HepG2 (cell line): ENCODE measurements at regions of chr1 and their contacts with region 1.

Region 1: GRCh38 chr1:235415008-235415904 is 48.0 kb downstream of the TBCE start:
- DNase-seq: peak; percentile 80
- ATAC-seq: peak; percentile 78
- H3K4me3 ChIP-seq: no peak overlapping the region
- H3K27ac ChIP-seq: peak overlapping the region; percentile 51
- H3K4me1 ChIP-seq: peaks cover 54% of the 10 kb centered on the region
- H3K27me3 ChIP-seq: no peaks in the 10 kb centered on the region
- CTCF ChIP-seq: peak; percentile 77
- EP300 ChIP-seq: no peak
- POLR2A ChIP-seq: no peak
- RAD21 ChIP-seq: peak; percentile 71

Region 2: GRCh38 chr1:234486498-234487448 is 928.5 kb before region 1 on chr1:
- CTCF ChIA-PET with region 1: no interaction called
- POLR2A ChIA-PET with region 1: no interaction called
- in situ Hi-C with region 1: no loop called
- intact Hi-C with region 1: loop called (anchors 10 kb)
- DNase-seq: peak; percentile 77
- ATAC-seq: peak; percentile 91
- H3K4me3 ChIP-seq: peak overlapping the region in 2 of 3 experiments; percentile 27 to 40; a peak in 1 of 6 replicates
- H3K27ac ChIP-seq: no peak overlapping the region
- H3K4me1 ChIP-seq: peaks cover 26% of the 10 kb centered on the region
- H3K27me3 ChIP-seq: 0 out of 5 replicates have a peak, but pooled peaks cover 1 to 10% of the 10 kb centered on the region in 2 experiments
- CTCF ChIP-seq: peak; percentile 91
- EP300 ChIP-seq: no peak
- POLR2A ChIP-seq: no peak
- RAD21 ChIP-seq: peak; percentile 76

Region 3: GRCh38 chr1:235100194-235100772 is 315.0 kb before region 1 on chr1:
- CTCF ChIA-PET with region 1: interaction called, 4 read pairs
- POLR2A ChIA-PET with region 1: no interaction called
- in situ Hi-C with region 1: loop called (anchors 5 kb)
- intact Hi-C with region 1: loop called (anchors 5 kb)
- DNase-seq: peak; percentile 52
- ATAC-seq: peak; percentile 48
- H3K4me3 ChIP-seq: no peak overlapping the region
- H3K27ac ChIP-seq: peak overlapping the region; percentile 13
- H3K4me1 ChIP-seq: peaks cover 63% of the 10 kb centered on the region
- H3K27me3 ChIP-seq: no peaks in the 10 kb centered on the region
- CTCF ChIP-seq: no peak
- EP300 ChIP-seq: 0 out of 4 replicates have a peak, but pooled peaks of 1 of the 2 experiments have one; percentile 26
- POLR2A ChIP-seq: no peak
- RAD21 ChIP-seq: no peak

Region 4: DNA sequence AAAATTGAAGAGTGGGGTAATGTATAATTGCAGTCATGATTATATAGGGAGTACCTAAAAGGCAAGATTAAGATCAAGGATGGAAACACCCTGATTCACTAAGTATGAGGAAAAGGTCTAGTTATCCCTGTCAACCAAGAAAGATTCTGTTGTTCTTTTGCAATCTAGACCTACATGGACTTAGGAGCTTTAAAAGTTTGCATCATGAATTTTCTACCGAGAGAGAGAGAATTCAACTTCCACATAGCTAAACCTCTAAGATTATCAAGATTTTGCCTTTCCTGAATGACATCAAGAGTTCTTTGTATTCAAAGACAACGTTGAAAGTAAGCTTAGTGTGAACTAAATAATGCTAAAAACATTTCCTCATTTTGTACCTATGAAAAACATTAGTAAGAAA is 175.4 kb before region 1 on chr1:
- CTCF ChIA-PET with region 1: no interaction called
- POLR2A ChIA-PET with region 1: interaction called, 3 read pairs
- in situ Hi-C with region 1: no loop called
- intact Hi-C with region 1: loop called (anchors 5 kb)
- DNase-seq: peak; percentile 21
- ATAC-seq: no peak
- H3K4me3 ChIP-seq: no peak overlapping the region
- H3K27ac ChIP-seq: peak overlapping the region; percentile 3
- H3K4me1 ChIP-seq: peaks cover 39% of the 10 kb centered on the region
- H3K27me3 ChIP-seq: no peaks in the 10 kb centered on the region
- CTCF ChIP-seq: no peak
- EP300 ChIP-seq: no peak
- POLR2A ChIP-seq: no peak
- RAD21 ChIP-seq: no peak

Region 5: DNA sequence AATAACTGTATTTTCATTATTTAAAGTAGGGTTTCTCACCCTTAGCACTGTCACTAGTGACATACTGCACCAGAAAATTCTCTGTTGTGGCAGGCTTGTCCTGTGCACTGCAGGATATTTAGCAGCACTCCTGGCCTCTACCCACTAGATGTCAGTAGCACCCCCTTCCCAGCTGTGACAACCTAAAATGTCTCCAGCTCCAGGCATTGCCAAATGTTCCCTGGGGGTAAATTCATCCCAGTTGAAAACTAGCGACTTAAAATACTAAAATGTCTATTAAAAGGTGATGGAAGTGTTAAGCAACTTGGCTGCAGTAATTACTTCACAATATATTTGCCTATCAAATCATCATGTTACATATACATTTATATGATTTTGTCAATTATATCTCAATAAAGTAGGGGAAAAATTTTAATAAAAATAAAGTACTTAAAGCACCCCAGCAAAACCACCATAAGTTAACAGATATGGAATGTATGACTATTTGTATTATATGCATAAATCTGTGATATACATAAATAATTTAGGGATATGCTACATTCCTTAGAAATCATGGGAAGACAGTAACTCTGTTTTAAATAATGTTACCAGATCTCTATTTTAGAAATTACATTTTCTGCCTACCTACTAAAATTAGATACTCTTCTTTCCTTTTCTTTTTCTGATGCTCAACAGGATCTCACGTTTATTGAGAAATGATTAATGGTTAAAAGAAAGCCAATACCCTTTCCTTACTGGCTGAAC is 161.9 kb before region 1 on chr1:
- CTCF ChIA-PET with region 1: interaction called, 46 read pairs
- POLR2A ChIA-PET with region 1: interaction called, 3 read pairs
- in situ Hi-C with region 1: loop called (anchors 5 kb)
- intact Hi-C with region 1: loop called (anchors 1 kb)
- DNase-seq: peak; percentile 66
- ATAC-seq: peak; percentile 98
- H3K4me3 ChIP-seq: no peak overlapping the region
- H3K27ac ChIP-seq: no peak overlapping the region
- H3K4me1 ChIP-seq: peaks cover 13% of the 10 kb centered on the region
- H3K27me3 ChIP-seq: no peaks in the 10 kb centered on the region
- CTCF ChIP-seq: peak; percentile 87
- EP300 ChIP-seq: no peak
- POLR2A ChIP-seq: no peak
- RAD21 ChIP-seq: peak; percentile 83

Region 6: DNA sequence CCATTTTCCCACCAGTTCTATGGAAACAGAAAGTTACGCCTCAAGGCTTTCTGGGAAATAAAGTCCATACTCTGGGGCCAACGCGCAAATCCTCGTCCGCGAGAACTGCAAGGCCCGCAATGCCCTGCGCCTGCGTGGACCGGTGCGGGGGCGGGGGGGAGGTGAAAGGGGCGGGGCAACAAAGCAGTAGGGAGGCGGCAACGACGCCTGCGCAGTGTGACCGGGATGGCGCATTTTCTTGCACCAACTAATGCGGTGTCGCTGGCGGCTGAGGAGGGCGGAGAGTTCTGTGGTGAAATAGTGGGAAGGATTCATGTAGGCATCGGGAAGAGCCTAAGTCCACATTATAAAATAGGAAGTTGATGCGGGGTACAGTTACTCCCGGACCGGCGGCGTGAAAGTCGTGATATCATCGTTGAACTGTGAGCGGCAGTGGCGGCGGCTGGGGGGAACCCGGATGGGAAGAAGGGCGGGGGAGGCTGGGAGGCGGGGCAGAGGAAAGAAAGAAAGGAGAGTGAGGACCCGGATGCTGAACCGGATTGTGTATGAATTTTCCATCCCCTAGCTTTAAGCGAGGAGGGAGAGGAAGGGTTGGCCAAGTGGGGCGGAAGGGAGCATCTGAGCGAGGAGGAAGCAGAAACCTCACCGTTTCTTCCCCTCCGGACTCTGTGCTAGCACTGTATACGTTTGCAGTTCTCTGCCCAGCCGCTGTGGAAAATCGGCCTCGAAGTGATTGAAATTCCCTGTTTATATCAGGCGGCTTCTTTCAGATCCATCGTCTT is 86.7 kb before region 1 on chr1 and contains the start of gene GGPS1:
- CTCF ChIA-PET with region 1: interaction called, 3 read pairs
- POLR2A ChIA-PET with region 1: interaction called, 5 read pairs
- in situ Hi-C with region 1: no loop called
- intact Hi-C with region 1: loop called (anchors 1 kb)
- DNase-seq: peak; percentile 100
- ATAC-seq: peak; percentile 82
- H3K4me3 ChIP-seq: peak within 1 kb of the TSS; percentile 86 to 95 (median 91)
- H3K27ac ChIP-seq: peak within 1 kb of the TSS; percentile 89
- H3K4me1 ChIP-seq: peaks cover 47% of the 10 kb centered on the region
- H3K27me3 ChIP-seq: no peaks in the 10 kb centered on the region; a peak in 1 of 5 replicates
- CTCF ChIP-seq: no peak
- EP300 ChIP-seq: no peak; a peak in 1 of 4 replicates
- POLR2A ChIP-seq: peak; percentile 67 to 94
- RAD21 ChIP-seq: no peak; the same call in 1 of the 2 replicates
- total RNA-seq, gene GGPS1: 42.6 and 59.1 TPM in 2 replicates

Region 7: DNA sequence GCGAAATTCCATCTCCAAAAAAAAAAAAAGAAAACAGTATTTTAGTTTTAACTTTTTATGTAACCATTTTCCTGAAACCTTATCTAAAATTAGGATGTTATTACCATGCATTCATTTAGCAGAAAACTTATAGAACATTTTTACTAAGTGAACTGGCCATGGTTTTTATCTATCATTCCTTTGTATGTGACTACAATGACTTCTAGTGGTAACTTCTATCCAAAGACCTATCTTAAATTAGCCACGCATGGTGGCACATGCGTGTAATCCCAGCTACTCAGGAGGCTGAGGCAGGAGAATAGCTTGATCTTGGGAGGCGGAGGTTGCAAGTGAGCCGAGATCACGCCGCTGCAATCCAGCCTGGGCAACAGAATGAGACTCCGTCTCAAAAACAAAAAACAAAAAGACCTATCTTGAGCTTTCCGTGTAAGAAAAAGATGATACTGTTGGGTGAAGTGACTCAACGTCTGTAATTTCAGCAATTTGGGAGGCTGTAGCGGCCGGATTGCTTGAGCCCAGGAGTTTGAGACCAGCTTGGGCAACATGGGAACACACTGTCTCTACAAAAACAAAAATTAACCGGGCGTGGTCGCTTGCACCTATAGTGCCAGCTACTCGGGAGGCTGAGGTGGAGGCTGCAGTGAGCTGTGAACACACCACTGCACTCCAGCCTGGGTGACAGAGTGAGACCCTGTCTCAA is 75.4 kb before region 1 on chr1:
- CTCF ChIA-PET with region 1: no interaction called
- POLR2A ChIA-PET with region 1: no interaction called
- in situ Hi-C with region 1: no loop called
- intact Hi-C with region 1: no loop called
- DNase-seq: no peak
- ATAC-seq: no peak
- H3K4me3 ChIP-seq: no peak overlapping the region
- H3K27ac ChIP-seq: no peak overlapping the region
- H3K4me1 ChIP-seq: no peaks in the 10 kb centered on the region
- H3K27me3 ChIP-seq: no peaks in the 10 kb centered on the region
- CTCF ChIP-seq: no peak
- EP300 ChIP-seq: no peak
- POLR2A ChIP-seq: no peak
- RAD21 ChIP-seq: no peak

Region 8: GRCh38 chr1:235367000-235367908 is 48.0 kb before region 1 on chr1 and contains the start of gene TBCE:
- CTCF ChIA-PET with region 1: no interaction called
- POLR2A ChIA-PET with region 1: interaction called, 15 read pairs
- in situ Hi-C with region 1: no loop called
- intact Hi-C with region 1: loop called (anchors 1 kb)
- DNase-seq: peak; percentile 96
- ATAC-seq: peak; percentile 100
- H3K4me3 ChIP-seq: peak within 1 kb of the TSS; percentile 84 to 97 (median 97)
- H3K27ac ChIP-seq: peak within 1 kb of the TSS; percentile 78
- H3K4me1 ChIP-seq: peaks cover 35% of the 10 kb centered on the region
- H3K27me3 ChIP-seq: no peaks in the 10 kb centered on the region; a peak in 1 of 5 replicates
- CTCF ChIP-seq: peak; percentile 29
- EP300 ChIP-seq: no peak
- POLR2A ChIP-seq: peak; percentile 96 to 97
- RAD21 ChIP-seq: peak; percentile 50
- total RNA-seq, gene TBCE: 25.6 and 33.0 TPM in 2 replicates